Activated CD4-positive, alpha-beta T cell treated with anti-CD3 and anti-CD28 coated beads for 36 hours (primary cell): ENCODE measurements at regions of chr17 and their contacts with region 1.

Region 1: GRCh38 chr17:30477083-30477773 is at the start of gene GOSR1:
- DNase-seq: peak; percentile 97
- ATAC-seq: peak; percentile 99
- H3K4me3 Mint-ChIP-seq: peak within 1 kb of the TSS; percentile 99
- H3K27ac Mint-ChIP-seq: peak within 1 kb of the TSS; percentile 96
- H3K4me1 Mint-ChIP-seq: peaks cover 36% of the 10 kb centered on the region
- H3K27me3 Mint-ChIP-seq: peaks cover 2% of the 10 kb centered on the region
- total RNA-seq, gene GOSR1: 43.5 to 53.0 TPM

Region 2: DNA sequence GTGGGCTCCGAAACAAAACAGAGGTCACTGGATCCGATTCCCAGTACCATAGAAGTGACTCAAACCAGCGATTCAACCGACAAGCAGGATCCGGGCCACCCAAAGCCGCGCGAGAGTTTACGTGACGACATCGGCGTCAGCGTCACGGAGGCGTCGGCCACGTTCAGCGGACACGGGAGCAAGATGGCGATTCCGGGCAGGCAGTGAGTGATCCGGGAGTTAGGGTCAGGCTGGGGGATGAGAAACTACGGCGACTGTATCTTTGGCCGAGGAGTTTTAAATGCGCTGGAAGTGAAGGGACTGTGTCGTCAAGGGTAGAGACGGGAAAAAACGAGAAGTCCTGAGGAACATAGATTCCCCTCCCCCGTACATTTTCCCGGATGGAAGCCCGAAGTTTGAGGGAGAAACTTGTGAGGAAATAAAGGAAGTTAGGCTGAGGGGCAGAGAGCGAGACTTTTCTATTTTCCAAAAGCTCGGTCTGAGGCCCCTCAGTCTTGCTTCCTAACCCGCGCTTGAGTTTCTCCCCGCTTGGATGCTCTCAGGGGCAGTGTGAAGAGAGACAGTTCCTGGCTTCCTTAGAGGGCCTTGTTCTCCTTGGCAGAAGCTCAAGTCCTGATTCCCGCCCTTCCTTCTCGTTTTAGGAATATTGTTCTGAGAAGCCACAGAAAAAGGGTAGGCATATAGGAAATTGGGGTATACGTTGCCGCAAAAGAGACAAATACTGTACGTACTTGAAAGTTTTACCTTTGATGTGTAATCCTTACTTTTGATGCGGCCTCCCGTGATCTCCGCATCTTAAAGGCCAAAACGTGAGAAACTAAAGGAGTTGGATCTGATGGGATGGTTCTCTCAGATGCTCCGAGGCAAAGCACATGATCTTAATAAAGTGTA is 360.3 kb before region 1 on chr17 and contains the start of gene NSRP1:
- CTCF ChIA-PET with region 1: interaction called, 3 read pairs
- POLR2A ChIA-PET with region 1: no interaction called
- intact Hi-C with region 1: loop called in 1 of 2 experiments (anchors 2 kb)
- DNase-seq: peak; percentile 97
- ATAC-seq: peak; percentile 95
- H3K4me3 Mint-ChIP-seq: peak within 1 kb of the TSS; percentile 90
- H3K27ac Mint-ChIP-seq: peak within 1 kb of the TSS; percentile 98
- H3K4me1 Mint-ChIP-seq: peaks cover 41% of the 10 kb centered on the region
- H3K27me3 Mint-ChIP-seq: no peaks in the 10 kb centered on the region
- total RNA-seq, gene NSRP1: 29.9 to 43.0 TPM

Region 3: GRCh38 chr17:30344283-30345088 is 132.7 kb before region 1 on chr17:
- CTCF ChIA-PET with region 1: interaction called, 3 read pairs
- POLR2A ChIA-PET with region 1: no interaction called
- intact Hi-C with region 1: loop called in 1 of 2 experiments (anchors 2 kb)
- DNase-seq: no peak
- ATAC-seq: no peak
- H3K4me3 Mint-ChIP-seq: no peak overlapping the region
- H3K27ac Mint-ChIP-seq: no peak overlapping the region
- H3K4me1 Mint-ChIP-seq: peaks cover 21% of the 10 kb centered on the region
- H3K27me3 Mint-ChIP-seq: no peaks in the 10 kb centered on the region

Region 4: DNA sequence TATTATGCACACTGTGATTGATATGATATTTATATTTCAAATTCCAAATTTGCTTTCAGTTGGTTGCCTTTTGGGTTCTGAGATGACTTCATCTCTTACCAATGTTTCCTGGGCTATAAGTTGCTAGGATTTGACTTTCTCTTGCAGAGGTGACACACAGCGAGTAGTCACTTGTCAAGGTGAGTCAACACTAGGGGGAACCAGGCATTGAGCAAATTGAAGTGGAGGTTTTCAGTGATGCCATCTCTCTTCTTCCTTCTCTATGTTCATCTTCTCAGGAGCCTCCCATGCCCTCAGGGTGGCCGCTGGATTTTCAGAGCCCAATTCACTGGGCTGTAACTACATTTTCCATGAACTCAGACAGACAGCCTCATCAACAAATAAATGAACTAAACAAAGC is 104.5 kb before region 1 on chr17:
- CTCF ChIA-PET with region 1: interaction called, 3 read pairs
- POLR2A ChIA-PET with region 1: no interaction called
- intact Hi-C with region 1: loop called in 1 of 2 experiments (anchors 1 kb)
- DNase-seq: peak; percentile 62
- ATAC-seq: peak; percentile 92
- H3K4me3 Mint-ChIP-seq: no peak overlapping the region
- H3K27ac Mint-ChIP-seq: peak overlapping the region; percentile 12
- H3K4me1 Mint-ChIP-seq: peaks cover 66% of the 10 kb centered on the region
- H3K27me3 Mint-ChIP-seq: no peaks in the 10 kb centered on the region

Region 5: DNA sequence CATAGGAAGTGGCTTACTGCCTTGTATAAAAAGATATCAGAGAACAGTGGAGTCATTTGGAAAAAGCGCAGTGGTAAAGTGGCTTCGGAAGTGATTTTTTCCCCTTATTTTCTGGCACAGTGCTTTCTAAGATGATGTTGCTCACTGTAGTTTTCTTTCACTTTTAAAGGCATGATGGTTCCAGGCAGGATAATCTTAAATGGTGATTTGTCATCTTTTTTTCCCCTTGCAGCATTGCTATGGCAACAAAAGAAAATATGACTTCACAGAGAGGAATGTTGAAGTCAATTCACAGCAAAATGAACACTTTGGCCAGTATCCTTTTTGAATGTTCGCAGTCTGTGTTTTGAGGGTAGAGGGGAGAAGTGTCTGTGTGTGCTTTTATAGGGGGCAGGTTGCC is 42.5 kb after region 1 on chr17:
- CTCF ChIA-PET with region 1: interaction called, 7 read pairs
- POLR2A ChIA-PET with region 1: no interaction called
- intact Hi-C with region 1: loop called in 1 of 2 experiments (anchors 5 kb)
- DNase-seq: no peak
- ATAC-seq: no peak
- H3K4me3 Mint-ChIP-seq: no peak overlapping the region
- H3K27ac Mint-ChIP-seq: peak overlapping the region; percentile 10
- H3K4me1 Mint-ChIP-seq: peaks cover 21% of the 10 kb centered on the region
- H3K27me3 Mint-ChIP-seq: no peaks in the 10 kb centered on the region

Region 6: DNA sequence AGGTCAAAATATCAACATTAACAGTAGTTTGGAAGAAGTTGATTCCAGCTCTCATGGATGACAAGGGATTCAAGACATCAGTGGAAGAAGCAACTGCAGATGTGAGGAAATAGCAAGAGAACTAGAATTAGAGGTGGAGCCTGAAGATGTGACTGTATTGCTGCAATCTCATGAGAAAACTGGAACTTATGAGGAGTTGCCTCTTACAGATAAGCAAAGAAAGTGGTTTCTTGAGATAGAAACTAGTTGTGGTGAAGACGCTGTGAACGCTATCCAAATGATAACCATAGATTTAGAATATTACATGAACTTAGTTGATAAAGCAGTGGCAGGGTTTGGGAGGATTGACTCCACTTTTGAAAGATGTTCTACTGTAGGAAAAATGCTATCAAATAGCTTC is 67.8 kb after region 1 on chr17:
- CTCF ChIA-PET with region 1: no interaction called
- POLR2A ChIA-PET with region 1: no interaction called
- intact Hi-C with region 1: no loop called
- DNase-seq: no peak
- ATAC-seq: no peak
- H3K4me3 Mint-ChIP-seq: no peak overlapping the region
- H3K27ac Mint-ChIP-seq: no peak overlapping the region
- H3K4me1 Mint-ChIP-seq: no peaks in the 10 kb centered on the region
- H3K27me3 Mint-ChIP-seq: no peaks in the 10 kb centered on the region

Region 7: GRCh38 chr17:30824356-30825145 is 347.3 kb after region 1 on chr17 and contains the start of gene CRLF3:
- CTCF ChIA-PET with region 1: interaction called, 5 read pairs
- POLR2A ChIA-PET with region 1: interaction called, 3 read pairs
- intact Hi-C with region 1: loop called (anchors 2 kb)
- DNase-seq: peak; percentile 95
- ATAC-seq: peak; percentile 91
- H3K4me3 Mint-ChIP-seq: peak within 1 kb of the TSS; percentile 95
- H3K27ac Mint-ChIP-seq: peak within 1 kb of the TSS; percentile 92
- H3K4me1 Mint-ChIP-seq: peaks cover 38% of the 10 kb centered on the region
- H3K27me3 Mint-ChIP-seq: no peaks in the 10 kb centered on the region
- total RNA-seq, gene CRLF3: 39.2 to 44.1 TPM